Calu3 (cell line): ENCODE measurements at regions of chr17 and their contacts with region 1.

Region 1: DNA sequence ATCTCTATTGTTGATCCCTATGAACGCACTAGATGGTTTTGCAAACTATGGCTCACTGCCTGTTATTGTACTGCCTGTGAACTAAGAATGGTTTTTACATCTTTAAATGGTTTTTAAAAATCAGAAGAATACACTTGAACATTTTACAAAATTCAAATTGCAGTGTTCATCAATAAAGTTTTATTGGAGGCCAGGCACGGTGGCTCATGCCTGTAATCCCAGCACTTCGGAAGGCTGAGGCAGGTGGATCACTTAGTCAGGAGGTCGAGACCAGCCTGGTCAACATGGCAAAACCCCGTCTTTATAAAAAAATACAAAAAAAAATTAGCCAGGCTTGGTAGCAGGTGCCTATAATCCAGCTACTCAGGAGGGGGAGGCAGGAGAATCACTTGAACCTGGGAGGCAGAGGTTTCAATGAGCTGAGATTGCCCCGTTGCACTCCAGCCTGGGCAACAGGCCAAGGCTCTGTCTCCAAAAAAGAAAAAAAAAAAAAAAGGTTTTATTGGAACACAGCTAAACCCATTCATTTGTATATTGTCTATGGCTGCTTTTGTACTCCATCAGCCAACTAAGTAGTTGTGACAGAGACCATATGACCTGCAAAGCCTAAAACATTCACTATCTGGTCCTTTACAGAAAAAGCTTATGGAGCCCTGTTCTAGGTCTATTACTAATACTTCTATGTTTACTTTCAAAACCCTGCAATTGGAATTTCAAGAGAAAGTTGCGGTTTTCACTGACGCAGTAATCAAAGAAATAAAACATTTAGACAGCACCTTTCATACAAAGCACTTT is 18.9 kb downstream of the IKZF3 start:
- DNase-seq: peak; percentile 81
- H3K4me3 Mint-ChIP-seq: no peak overlapping the region
- H3K27ac Mint-ChIP-seq: no peak overlapping the region
- H3K4me1 Mint-ChIP-seq: peaks cover 10% of the 10 kb centered on the region
- H3K27me3 Mint-ChIP-seq: no peaks in the 10 kb centered on the region
- CTCF ChIP-seq: no peak

Region 2: GRCh38 chr17:39653662-39654331 is 191.5 kb before region 1 on chr17:
- CTCF ChIA-PET with region 1: interaction called, 42 read pairs
- intact Hi-C with region 1: no loop called
- DNase-seq: peak; percentile 100
- H3K4me3 Mint-ChIP-seq: no peak overlapping the region
- H3K27ac Mint-ChIP-seq: no peak overlapping the region
- H3K4me1 Mint-ChIP-seq: peaks cover 23% of the 10 kb centered on the region
- H3K27me3 Mint-ChIP-seq: no peaks in the 10 kb centered on the region
- CTCF ChIP-seq: no peak

Region 3: DNA sequence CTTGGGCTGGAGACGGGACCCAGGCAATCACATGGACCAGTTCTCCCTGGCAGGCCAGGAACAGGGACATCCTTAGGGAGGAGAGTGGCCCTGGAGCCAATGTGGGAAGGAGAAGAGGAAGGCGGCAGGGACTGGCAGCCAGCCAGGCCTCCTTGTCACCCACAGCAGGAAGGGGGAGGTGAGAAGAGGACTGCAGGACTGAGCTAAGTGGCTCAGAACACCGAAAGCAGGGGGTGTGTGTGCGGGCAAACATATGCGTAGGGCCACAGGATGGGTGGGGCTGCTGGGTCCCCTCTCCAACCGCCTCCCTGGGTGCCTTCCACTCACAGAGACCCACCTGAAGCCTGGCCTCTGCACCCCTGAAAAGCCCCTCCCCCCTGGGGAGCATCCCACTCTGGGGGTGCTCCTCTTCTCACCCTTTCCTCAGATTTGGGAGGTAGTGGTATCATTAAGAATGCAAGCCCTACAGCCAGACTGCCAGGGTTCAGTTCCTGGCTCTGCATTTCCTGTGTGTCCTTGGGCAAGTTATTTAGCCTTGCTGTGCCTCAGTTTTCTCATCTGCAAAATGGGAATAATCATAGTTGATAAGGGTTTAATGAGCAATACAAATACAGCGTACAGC is 168.9 kb before region 1 on chr17:
- CTCF ChIA-PET with region 1: interaction called, 27 read pairs
- intact Hi-C with region 1: no loop called
- DNase-seq: peak; percentile 100
- H3K4me3 Mint-ChIP-seq: peak overlapping the region; percentile 3
- H3K27ac Mint-ChIP-seq: peak overlapping the region; percentile 62
- H3K4me1 Mint-ChIP-seq: peaks cover 91% of the 10 kb centered on the region
- H3K27me3 Mint-ChIP-seq: peaks cover 6% of the 10 kb centered on the region
- CTCF ChIP-seq: no peak

Region 4: GRCh38 chr17:39763046-39763820 is 82.0 kb before region 1 on chr17:
- CTCF ChIA-PET with region 1: interaction called, 30 read pairs
- intact Hi-C with region 1: no loop called
- DNase-seq: no peak
- H3K4me3 Mint-ChIP-seq: no peak overlapping the region
- H3K27ac Mint-ChIP-seq: no peak overlapping the region
- H3K4me1 Mint-ChIP-seq: peaks cover 12% of the 10 kb centered on the region
- H3K27me3 Mint-ChIP-seq: peaks cover 26% of the 10 kb centered on the region
- CTCF ChIP-seq: no peak

Region 5: GRCh38 chr17:39908789-39909352 is 63.6 kb after region 1 on chr17:
- CTCF ChIA-PET with region 1: interaction called, 716 read pairs
- intact Hi-C with region 1: no loop called
- DNase-seq: peak; percentile 67
- H3K4me3 Mint-ChIP-seq: no peak overlapping the region
- H3K27ac Mint-ChIP-seq: no peak overlapping the region
- H3K4me1 Mint-ChIP-seq: no peaks in the 10 kb centered on the region
- H3K27me3 Mint-ChIP-seq: no peaks in the 10 kb centered on the region
- CTCF ChIP-seq: no peak

Region 6: GRCh38 chr17:39927101-39927928 is 82.1 kb after region 1 on chr17 and contains the starts of genes LRRC3C and ORMDL3:
- CTCF ChIA-PET with region 1: interaction called, 159 read pairs
- intact Hi-C with region 1: no loop called
- DNase-seq: no peak
- H3K4me3 Mint-ChIP-seq: peak within 1 kb of the TSS; percentile 74
- H3K27ac Mint-ChIP-seq: peak within 1 kb of the TSS; percentile 66
- H3K4me1 Mint-ChIP-seq: peaks cover 60% of the 10 kb centered on the region
- H3K27me3 Mint-ChIP-seq: no peaks in the 10 kb centered on the region
- CTCF ChIP-seq: no peak
- total RNA-seq, gene LRRC3C: not detected in 2 replicates
- total RNA-seq, gene ORMDL3: 1,738 and 1,968 TPM in 2 replicates

Region 7: GRCh38 chr17:40062329-40063186 is 217.3 kb after region 1 on chr17 and contains the start of gene THRA:
- CTCF ChIA-PET with region 1: interaction called, 10 read pairs
- intact Hi-C with region 1: no loop called
- DNase-seq: peak; percentile 100
- H3K4me3 Mint-ChIP-seq: peak within 1 kb of the TSS; percentile 54
- H3K27ac Mint-ChIP-seq: peak within 1 kb of the TSS; percentile 27
- H3K4me1 Mint-ChIP-seq: peaks cover 55% of the 10 kb centered on the region
- H3K27me3 Mint-ChIP-seq: peaks cover 52% of the 10 kb centered on the region
- CTCF ChIP-seq: no peak
- total RNA-seq, gene THRA: 107 and 133 TPM in 2 replicates